BJ (cell line): ENCODE measurements at regions of chr1 and their contacts with region 1.

Region 1: DNA sequence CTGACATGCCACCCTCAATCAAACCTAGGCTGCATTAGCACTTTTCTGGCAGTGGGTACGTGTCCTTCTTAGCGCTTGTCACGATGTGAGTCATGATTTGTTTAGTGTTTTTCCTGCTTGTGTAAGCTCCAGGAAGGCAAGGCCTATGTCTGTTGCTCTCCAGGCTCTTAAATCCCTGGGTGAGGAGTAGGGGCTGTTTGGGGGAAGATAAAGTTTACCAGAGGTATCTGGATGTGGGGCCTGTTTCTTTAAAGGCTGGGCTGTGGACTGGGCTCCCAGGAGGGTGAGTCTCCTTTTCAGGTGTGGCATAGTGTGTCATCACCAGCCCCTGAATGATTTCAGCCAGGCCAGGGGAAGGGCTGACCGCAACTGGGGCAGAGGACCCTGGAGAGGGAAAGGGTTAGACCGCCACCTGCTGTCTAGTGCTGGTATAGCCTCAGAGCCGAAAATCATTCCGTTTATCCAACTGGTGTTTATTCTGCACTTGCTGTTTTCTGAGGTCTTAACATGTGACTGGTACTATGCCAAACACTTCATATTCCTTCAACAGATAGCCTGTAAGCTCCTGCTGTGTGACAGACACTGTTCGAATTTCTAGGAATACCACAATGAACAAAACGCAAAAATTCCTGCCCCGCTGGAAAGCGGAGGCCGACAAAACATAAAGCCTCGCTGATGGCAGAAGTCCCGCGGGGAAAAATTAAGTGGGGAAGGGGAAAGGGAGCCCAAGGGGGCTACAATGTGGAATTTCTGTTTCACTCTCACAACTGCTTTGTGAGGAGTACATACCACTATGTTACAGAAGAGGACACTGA is 9.7 kb downstream of the SERINC2 start:
- DNase-seq: peak; percentile 31
- H3K4me3 ChIP-seq: no peak overlapping the region
- H3K27me3 ChIP-seq: no peaks in the 10 kb centered on the region
- CTCF ChIP-seq: peak; percentile 95

Region 2: GRCh38 chr1:31372961-31373896 is 49.5 kb before region 1 on chr1 and contains the start of gene FABP3:
- CTCF ChIA-PET with region 1: interaction called, 10 read pairs
- POLR2A ChIA-PET with region 1: no interaction called
- DNase-seq: no peak
- H3K4me3 ChIP-seq: peak within 1 kb of the TSS; percentile 39
- H3K27me3 ChIP-seq: no peaks in the 10 kb centered on the region
- CTCF ChIP-seq: no peak
- polyA plus RNA-seq, gene FABP3: 9.0 and 11.7 TPM in 2 replicates

Region 3: DNA sequence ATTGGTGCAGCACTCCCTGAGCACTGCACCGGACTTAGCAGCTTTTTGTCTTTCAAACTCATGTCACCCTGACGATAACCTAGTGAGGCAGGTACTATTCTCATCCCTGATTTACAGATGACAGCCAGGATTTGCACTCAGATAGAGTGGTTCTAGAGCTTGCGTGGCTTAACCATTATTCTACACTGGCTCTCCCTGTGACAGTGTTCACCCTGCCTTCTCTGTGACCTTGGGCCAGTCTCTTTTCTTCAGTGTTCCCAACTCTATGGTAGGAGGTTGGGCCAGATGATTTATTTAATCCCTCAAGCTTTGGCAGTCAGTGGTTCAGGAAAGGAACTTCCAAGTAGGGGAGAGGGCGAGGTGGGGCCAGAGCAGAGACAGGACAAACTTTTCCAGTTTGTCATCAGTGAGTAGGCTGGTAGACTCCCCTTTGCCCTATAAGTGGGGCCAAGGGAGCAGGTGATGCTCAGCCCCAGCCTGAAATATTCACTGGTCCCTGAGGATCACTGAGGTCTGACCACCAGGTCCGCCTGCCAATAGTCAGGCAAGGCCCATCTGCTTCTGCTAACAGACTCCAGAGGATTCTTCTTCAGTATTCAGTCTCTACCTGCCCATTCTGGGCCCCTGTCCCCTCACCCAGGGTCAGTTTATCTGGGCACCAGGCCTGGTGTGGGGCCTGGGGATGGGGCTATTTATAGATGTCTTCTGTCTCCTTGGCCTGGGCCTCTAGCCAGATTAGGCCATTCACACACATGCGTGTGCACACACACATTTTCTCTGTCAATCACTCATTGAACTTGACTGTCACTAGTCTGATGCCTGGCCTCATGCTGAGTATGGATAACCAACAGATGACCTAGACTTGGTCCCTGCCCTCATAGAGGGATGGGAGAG is 41.1 kb before region 1 on chr1:
- CTCF ChIA-PET with region 1: interaction called, 12 read pairs
- POLR2A ChIA-PET with region 1: no interaction called
- DNase-seq: no peak
- H3K4me3 ChIP-seq: no peak overlapping the region
- H3K27me3 ChIP-seq: no peaks in the 10 kb centered on the region
- CTCF ChIP-seq: no peak

Region 4: GRCh38 chr1:31394628-31395193 is 28.0 kb before region 1 on chr1:
- CTCF ChIA-PET with region 1: interaction called, 387 read pairs
- POLR2A ChIA-PET with region 1: interaction called, 3 read pairs
- DNase-seq: no peak
- H3K4me3 ChIP-seq: no peak overlapping the region
- H3K27me3 ChIP-seq: no peaks in the 10 kb centered on the region
- CTCF ChIP-seq: peak; percentile 95

Region 5: GRCh38 chr1:31487143-31487542 is 64.4 kb after region 1 on chr1:
- CTCF ChIA-PET with region 1: no interaction called
- POLR2A ChIA-PET with region 1: no interaction called
- DNase-seq: no peak
- H3K4me3 ChIP-seq: no peak overlapping the region
- H3K27me3 ChIP-seq: peaks cover 8% of the 10 kb centered on the region
- CTCF ChIP-seq: no peak